RWPE1 (cell line): ENCODE measurements at regions of chr2 and their contacts with region 1.

Region 1: GRCh38 chr2:177164584-177165052 is 48.0 kb upstream of the HNRNPA3 start:
- DNase-seq: peak; percentile 68
- H3K27ac ChIP-seq: no peak overlapping the region
- CTCF ChIP-seq: peak; percentile 100

Region 2: DNA sequence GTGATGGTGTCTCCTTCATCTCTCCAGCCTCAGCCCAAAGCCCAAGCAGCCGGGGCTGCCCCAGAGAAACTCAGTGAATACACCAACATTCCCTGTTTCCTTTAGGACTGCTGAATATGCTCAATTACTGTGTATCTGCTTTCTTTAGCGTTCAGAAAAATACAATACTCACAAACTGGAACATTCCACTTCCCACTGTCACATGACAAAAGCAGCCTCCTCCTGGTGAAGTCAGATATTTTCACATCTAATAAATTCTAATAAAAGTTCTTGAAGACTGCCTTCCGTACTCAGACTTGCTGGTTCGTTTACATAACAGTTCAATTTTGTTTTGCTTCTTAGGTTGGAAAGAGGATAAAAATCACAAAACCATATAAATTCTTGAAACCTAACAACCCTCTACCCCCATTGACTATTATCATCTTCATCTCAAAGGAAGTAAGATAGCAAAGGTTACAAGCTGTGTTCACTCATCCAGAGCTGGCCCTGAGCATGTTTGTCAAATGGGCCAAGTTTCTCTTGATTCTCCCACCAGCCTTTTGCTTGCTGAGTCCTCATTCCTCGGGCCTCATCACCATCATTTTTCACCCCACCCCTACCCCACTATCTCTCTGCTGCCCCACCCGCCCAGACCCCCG is 142.8 kb before region 1 on chr2:
- CTCF ChIA-PET with region 1: no interaction called
- POLR2A ChIA-PET with region 1: no interaction called
- DNase-seq: no peak
- H3K27ac ChIP-seq: no peak overlapping the region
- CTCF ChIP-seq: no peak

Region 3: GRCh38 chr2:177212106-177212890 is 47.7 kb after region 1 on chr2 and contains the start of gene HNRNPA3:
- CTCF ChIA-PET with region 1: interaction called, 10 read pairs
- POLR2A ChIA-PET with region 1: interaction called, 3 read pairs
- DNase-seq: peak; percentile 98
- H3K27ac ChIP-seq: peak within 1 kb of the TSS; percentile 96
- CTCF ChIP-seq: no peak

Region 4: DNA sequence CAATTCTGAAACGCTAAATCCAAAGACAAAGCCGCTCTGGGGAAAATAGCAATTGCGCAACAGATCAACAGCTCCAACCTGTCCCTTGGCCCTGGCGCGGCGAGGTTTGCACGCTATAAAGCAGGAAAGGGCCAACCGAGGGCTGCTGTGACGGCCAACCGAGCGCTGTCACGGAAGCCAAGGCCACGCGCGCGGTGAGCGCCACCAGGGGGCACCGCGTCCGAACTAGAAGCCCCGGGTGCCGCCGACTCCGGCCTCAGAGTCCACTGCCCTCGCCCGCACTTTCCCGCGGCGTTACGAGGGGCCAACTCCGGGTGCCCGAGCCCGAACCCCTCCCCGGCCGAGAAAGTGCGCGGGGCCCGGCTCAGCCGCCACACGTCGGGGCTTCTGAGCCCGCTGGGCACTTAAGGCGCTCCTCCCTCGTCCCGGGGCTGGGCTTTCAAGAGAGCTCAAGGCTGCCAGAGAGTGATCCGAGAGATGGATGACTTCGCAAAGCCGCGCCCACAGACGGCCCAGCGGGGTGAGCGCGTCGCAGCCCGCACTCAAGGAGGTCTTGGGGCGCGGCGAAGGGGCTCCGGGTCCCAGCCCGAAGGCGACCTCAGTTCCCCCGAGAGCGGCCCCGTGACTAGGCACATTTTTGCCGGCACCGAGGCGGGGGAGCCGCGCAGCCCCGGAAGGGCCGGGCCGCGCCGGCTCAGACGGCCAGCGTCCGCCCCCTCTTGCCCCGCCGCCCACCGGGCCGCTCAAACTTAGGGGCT is 99.0 kb after region 1 on chr2:
- CTCF ChIA-PET with region 1: interaction called, 14 read pairs
- POLR2A ChIA-PET with region 1: interaction called, 7 read pairs
- DNase-seq: peak; percentile 86
- H3K27ac ChIP-seq: peak overlapping the region; percentile 100
- CTCF ChIP-seq: peak; percentile 86

Region 5: GRCh38 chr2:177332041-177332991 is 167.7 kb after region 1 on chr2:
- CTCF ChIA-PET with region 1: interaction called, 37 read pairs
- POLR2A ChIA-PET with region 1: no interaction called
- DNase-seq: peak; percentile 41
- H3K27ac ChIP-seq: no peak overlapping the region
- CTCF ChIP-seq: peak; percentile 65

Region 6: DNA sequence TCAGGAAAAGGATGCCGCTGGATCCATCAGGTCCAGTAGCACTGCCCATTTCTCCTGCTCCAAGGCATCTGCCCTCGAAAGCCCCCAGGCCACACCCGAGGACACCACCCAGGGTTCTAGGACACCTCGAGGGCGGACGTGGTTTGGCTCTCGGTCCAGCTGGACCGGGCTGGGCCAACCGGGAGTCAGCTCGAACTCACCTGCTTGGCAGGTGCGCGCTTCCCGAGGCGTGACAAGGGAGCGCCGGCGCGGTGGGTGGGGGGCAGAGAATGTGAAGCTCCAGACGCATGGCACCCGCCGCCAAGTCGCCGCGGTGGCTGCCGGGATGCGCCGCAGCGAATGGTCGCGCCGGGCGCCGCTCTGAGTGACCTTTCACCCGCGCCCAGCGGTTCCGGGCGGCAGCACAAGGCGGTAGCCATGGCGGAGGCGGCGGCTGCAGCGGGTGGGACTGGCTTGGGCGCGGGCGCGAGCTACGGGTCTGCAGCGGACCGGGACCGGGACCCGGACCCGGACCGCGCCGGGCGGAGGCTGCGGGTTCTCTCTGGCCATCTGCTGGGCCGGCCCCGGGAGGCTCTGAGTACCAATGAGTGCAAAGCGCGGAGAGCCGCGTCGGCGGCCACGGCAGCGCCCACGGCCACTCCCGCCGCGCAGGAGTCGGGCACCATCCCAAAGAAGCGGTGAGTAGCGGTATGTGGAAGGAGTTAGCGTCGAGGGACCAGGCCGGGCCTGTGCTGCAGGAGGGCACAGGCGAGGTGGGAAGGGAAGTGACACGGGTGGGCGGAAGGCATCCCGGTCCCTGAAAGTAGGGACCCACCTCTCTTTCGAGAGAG is 228.0 kb after region 1 on chr2 and contains the start of gene AGPS:
- CTCF ChIA-PET with region 1: interaction called, 12 read pairs
- POLR2A ChIA-PET with region 1: no interaction called
- DNase-seq: peak; percentile 55
- H3K27ac ChIP-seq: peak within 1 kb of the TSS; percentile 80
- CTCF ChIP-seq: no peak